ENCODE measurements at regions of chr11 and their contacts with region 1.

Region 1: GRCh38 chr11:9250139-9250582 is 15.0 kb downstream of the DENND5A start:
- DNase-seq: peak; percentile 32
- H3K4me3 Mint-ChIP-seq: peak overlapping the region; percentile 53
- H3K27ac Mint-ChIP-seq: peak overlapping the region; percentile 73
- H3K4me1 Mint-ChIP-seq: peaks cover 51% of the 10 kb centered on the region
- H3K27me3 Mint-ChIP-seq: no peaks in the 10 kb centered on the region

Region 2: GRCh38 chr11:9219572-9219971 is 30.6 kb before region 1 on chr11:
- intact Hi-C with region 1: no loop called
- DNase-seq: no peak
- H3K4me3 Mint-ChIP-seq: no peak overlapping the region
- H3K27ac Mint-ChIP-seq: no peak overlapping the region
- H3K4me1 Mint-ChIP-seq: peaks cover 20% of the 10 kb centered on the region
- H3K27me3 Mint-ChIP-seq: no peaks in the 10 kb centered on the region

Region 3: GRCh38 chr11:9231848-9232177 is 18.3 kb before region 1 on chr11:
- intact Hi-C with region 1: loop called (anchors 2 kb)
- DNase-seq: no peak
- H3K4me3 Mint-ChIP-seq: peak overlapping the region; percentile 24
- H3K27ac Mint-ChIP-seq: peak overlapping the region; percentile 42
- H3K4me1 Mint-ChIP-seq: peaks cover 39% of the 10 kb centered on the region
- H3K27me3 Mint-ChIP-seq: no peaks in the 10 kb centered on the region

Measured in activated T-helper 2 cell treated with anti-CD3 and anti-CD28 coated beads, Interferon-gamma antibody, Interleukin-2, Interleukin-4, amounts not matched to agents 10 μg/mL and 5 μg/mL and 100 μg/mL, durations not matched to agents 14 hours and 24 hours and 36 hours (primary cell).